Activated B cell treated with CpG ODN at 0.5 μM for 24 hours (primary cell): ENCODE measurements at regions of chr10 and their contacts with region 1.

Region 1: GRCh38 chr10:98467506-98468346 is 21.0 kb upstream of the HPS1 start:
- DNase-seq: peak; percentile 53
- ATAC-seq: peak; percentile 96
- H3K4me3 Mint-ChIP-seq: peak overlapping the region; percentile 97
- H3K27ac Mint-ChIP-seq: peak overlapping the region; percentile 88
- H3K4me1 Mint-ChIP-seq: peaks cover 4% of the 10 kb centered on the region
- H3K27me3 Mint-ChIP-seq: peaks cover 8% of the 10 kb centered on the region
- CTCF ChIP-seq: no peak

Region 2: DNA sequence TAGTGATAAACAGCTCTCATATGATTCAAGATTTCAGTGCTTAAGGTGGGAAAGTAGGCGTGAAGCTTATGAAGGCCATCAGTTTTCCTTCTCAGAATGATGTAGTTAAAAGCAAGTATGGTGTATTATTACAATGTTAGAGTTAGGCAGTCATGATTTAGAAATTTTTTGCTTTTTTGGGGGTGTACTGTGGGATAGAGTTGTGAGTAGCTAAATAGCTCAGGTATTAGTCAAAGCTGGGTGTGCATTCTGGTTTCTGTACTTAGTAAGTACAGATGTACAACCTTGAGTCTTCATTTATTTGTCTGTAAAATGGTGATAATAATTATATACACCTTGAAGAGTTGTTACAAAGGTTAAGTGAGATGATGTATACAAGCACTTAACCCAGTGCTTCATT is 281.0 kb before region 1 on chr10:
- CTCF ChIA-PET with region 1: no interaction called
- POLR2A ChIA-PET with region 1: no interaction called
- intact Hi-C with region 1: no loop called
- DNase-seq: no peak
- ATAC-seq: no peak
- H3K4me3 Mint-ChIP-seq: no peak overlapping the region
- H3K27ac Mint-ChIP-seq: no peak overlapping the region
- H3K4me1 Mint-ChIP-seq: peaks cover 3% of the 10 kb centered on the region
- H3K27me3 Mint-ChIP-seq: no peaks in the 10 kb centered on the region
- CTCF ChIP-seq: no peak

Region 3: GRCh38 chr10:98212196-98212595 is 255.5 kb before region 1 on chr10:
- CTCF ChIA-PET with region 1: no interaction called
- POLR2A ChIA-PET with region 1: no interaction called
- intact Hi-C with region 1: no loop called
- DNase-seq: no peak
- ATAC-seq: no peak
- H3K4me3 Mint-ChIP-seq: no peak overlapping the region
- H3K27ac Mint-ChIP-seq: no peak overlapping the region
- H3K4me1 Mint-ChIP-seq: peaks cover 27% of the 10 kb centered on the region
- H3K27me3 Mint-ChIP-seq: no peaks in the 10 kb centered on the region
- CTCF ChIP-seq: no peak

Region 4: GRCh38 chr10:98446661-98447221 is 21.0 kb before region 1 on chr10 and contains the start of gene HPS1:
- CTCF ChIA-PET with region 1: interaction called, 5 read pairs
- POLR2A ChIA-PET with region 1: interaction called, 5 read pairs
- intact Hi-C with region 1: loop called (anchors 1 kb)
- DNase-seq: peak; percentile 93
- ATAC-seq: peak; percentile 92
- H3K4me3 Mint-ChIP-seq: peak within 1 kb of the TSS; percentile 92
- H3K27ac Mint-ChIP-seq: peak within 1 kb of the TSS; percentile 96
- H3K4me1 Mint-ChIP-seq: peaks cover 56% of the 10 kb centered on the region
- H3K27me3 Mint-ChIP-seq: no peaks in the 10 kb centered on the region
- CTCF ChIP-seq: no peak
- total RNA-seq, gene HPS1: 104 and 106 TPM in 2 replicates

Region 5: GRCh38 chr10:98486421-98486820 is 18.7 kb after region 1 on chr10:
- CTCF ChIA-PET with region 1: no interaction called
- POLR2A ChIA-PET with region 1: no interaction called
- intact Hi-C with region 1: no loop called
- DNase-seq: no peak
- ATAC-seq: no peak
- H3K4me3 Mint-ChIP-seq: no peak overlapping the region
- H3K27ac Mint-ChIP-seq: no peak overlapping the region
- H3K4me1 Mint-ChIP-seq: peaks cover 2% of the 10 kb centered on the region
- H3K27me3 Mint-ChIP-seq: peaks cover 7% of the 10 kb centered on the region
- CTCF ChIP-seq: no peak

Region 6: DNA sequence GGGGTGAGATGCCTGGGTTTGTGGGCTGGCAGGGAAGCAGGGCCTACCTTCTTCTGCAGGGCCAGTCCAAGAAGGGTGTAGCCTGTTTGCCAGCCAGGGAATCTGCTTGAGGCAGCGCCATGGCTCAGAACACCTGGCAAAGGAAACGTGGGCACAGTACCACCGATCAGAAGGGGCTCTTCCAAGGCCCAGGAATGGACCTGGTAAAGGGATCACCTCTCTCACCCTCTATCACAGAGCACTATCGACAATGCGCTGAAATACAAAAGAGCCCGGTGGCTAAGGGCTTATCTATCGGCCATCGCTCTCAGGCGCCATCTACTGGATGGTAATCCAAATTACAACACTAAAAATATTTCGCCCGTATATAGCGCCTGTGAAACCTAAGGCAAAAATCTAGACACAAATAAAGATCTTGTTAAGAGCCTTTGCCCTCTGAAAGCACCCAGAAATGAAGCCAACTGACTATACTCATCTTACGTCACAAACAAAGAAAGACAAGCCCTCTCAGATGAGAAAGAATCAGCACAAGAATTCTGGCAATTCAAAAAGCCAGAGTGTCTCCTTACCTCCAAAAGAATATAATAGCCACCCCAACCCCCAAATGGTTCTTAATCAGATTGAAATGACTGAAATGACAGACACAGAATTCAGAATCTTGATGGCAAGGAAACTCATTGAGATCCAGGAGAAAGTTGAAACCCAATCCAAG is 196.8 kb after region 1 on chr10:
- CTCF ChIA-PET with region 1: interaction called, 25 read pairs
- POLR2A ChIA-PET with region 1: no interaction called
- intact Hi-C with region 1: loop called (anchors 1 kb)
- DNase-seq: no peak
- ATAC-seq: peak; percentile 49
- H3K4me3 Mint-ChIP-seq: no peak overlapping the region
- H3K27ac Mint-ChIP-seq: no peak overlapping the region
- H3K4me1 Mint-ChIP-seq: no peaks in the 10 kb centered on the region
- H3K27me3 Mint-ChIP-seq: peaks cover 22% of the 10 kb centered on the region
- CTCF ChIP-seq: no peak

Region 7: GRCh38 chr10:98694014-98694413 is 226.3 kb after region 1 on chr10:
- CTCF ChIA-PET with region 1: no interaction called
- POLR2A ChIA-PET with region 1: no interaction called
- intact Hi-C with region 1: no loop called
- DNase-seq: no peak
- ATAC-seq: no peak
- H3K4me3 Mint-ChIP-seq: no peak overlapping the region
- H3K27ac Mint-ChIP-seq: no peak overlapping the region
- H3K4me1 Mint-ChIP-seq: no peaks in the 10 kb centered on the region
- H3K27me3 Mint-ChIP-seq: peaks cover 11% of the 10 kb centered on the region
- CTCF ChIP-seq: no peak

Region 8: DNA sequence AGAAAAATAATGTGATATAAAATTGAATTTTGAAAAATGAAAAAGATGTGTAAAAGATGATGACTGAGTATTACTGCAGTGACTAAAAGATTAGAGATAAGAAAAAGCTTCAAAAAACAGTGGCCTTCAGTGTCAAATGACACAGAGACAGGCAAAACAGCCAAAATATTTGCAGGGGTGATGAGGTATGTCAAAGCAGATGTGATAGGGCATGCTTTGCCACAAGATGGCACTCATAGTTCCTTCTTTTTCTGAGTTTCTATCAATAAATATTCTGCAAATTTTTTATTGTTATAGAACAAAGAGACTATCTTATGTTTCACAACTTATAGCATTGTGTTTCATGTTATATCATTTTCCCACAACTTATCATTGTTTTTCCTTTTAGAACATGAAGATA is 323.1 kb after region 1 on chr10:
- CTCF ChIA-PET with region 1: interaction called, 3 read pairs
- POLR2A ChIA-PET with region 1: no interaction called
- intact Hi-C with region 1: loop called (anchors 5 kb)
- DNase-seq: no peak
- ATAC-seq: no peak
- H3K4me3 Mint-ChIP-seq: no peak overlapping the region
- H3K27ac Mint-ChIP-seq: no peak overlapping the region
- H3K4me1 Mint-ChIP-seq: no peaks in the 10 kb centered on the region
- H3K27me3 Mint-ChIP-seq: peaks cover 9% of the 10 kb centered on the region
- CTCF ChIP-seq: no peak

Region 9: DNA sequence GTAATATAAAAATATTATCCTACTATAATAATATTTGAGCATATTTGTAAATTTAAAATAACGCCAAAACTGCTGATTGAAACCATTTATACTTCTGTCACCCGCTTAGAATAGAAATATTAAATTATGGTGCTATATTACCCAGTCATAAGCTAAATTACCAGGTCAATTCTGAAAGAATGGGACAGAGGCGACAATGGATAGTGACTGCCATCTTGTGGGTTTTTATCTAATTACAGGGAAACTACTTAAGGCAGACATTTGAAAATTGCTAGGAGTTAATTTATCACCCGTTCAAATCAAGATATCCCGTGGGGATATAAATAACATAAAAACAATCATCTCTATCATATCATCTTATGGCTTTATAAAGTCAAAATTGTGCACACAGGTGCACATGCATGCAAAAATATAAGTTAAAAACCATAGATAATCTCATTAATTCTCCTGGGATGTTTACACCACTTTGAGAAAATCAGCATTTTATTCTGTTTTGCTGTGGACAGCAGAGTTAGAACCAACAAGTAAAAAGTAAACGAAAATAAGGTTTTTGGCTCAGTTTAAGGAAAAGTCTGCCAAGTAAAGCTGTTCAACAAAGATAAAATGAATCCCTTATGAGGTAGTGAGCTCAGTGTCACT is 809.2 kb after region 1 on chr10:
- CTCF ChIA-PET with region 1: interaction called, 3 read pairs
- POLR2A ChIA-PET with region 1: no interaction called
- intact Hi-C with region 1: loop called (anchors 1 kb)
- DNase-seq: no peak
- ATAC-seq: no peak
- H3K4me3 Mint-ChIP-seq: no peak overlapping the region
- H3K27ac Mint-ChIP-seq: no peak overlapping the region
- H3K4me1 Mint-ChIP-seq: peaks cover 2% of the 10 kb centered on the region
- H3K27me3 Mint-ChIP-seq: peaks cover 12% of the 10 kb centered on the region
- CTCF ChIP-seq: no peak

Region 10: DNA sequence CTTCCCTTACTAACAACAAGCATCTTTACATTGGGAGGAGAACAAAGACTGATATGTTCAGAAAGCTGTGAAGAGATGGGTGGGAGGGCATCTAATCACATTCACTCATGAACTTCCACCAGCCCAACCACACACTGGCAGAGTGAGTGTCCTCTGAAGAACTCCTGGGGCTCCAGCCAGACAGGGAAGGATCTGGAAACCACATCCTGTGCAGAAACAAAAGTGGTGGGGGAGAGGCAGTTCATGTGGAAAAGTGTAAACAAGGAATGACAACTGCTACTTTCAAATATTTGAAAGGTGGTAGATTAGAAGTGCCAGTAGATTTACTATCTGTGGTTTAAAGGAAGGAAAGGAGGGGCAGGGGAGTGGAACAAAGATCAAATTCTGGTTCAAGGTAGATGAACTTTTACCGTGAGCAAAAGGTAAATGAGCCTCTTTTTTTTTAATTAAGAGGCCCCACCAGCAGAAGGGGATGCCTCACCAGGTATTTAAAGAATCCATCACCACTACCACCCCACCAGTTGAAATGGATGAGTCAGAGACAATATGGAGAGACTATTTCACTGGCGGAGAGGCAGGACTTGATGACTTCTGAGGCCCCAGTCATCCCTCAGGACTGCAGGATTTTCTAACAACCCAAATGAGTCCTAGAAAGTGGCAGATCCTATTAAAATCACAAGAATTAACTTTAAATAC is 928.2 kb after region 1 on chr10:
- CTCF ChIA-PET with region 1: interaction called, 3 read pairs
- POLR2A ChIA-PET with region 1: no interaction called
- intact Hi-C with region 1: loop called (anchors 10 kb)
- DNase-seq: no peak
- ATAC-seq: no peak
- H3K4me3 Mint-ChIP-seq: no peak overlapping the region
- H3K27ac Mint-ChIP-seq: no peak overlapping the region
- H3K4me1 Mint-ChIP-seq: no peaks in the 10 kb centered on the region
- H3K27me3 Mint-ChIP-seq: peaks cover 2% of the 10 kb centered on the region
- CTCF ChIP-seq: no peak

Region 11: GRCh38 chr10:99620713-99621453 is 1153.2 kb after region 1 on chr10:
- CTCF ChIA-PET with region 1: no interaction called
- POLR2A ChIA-PET with region 1: no interaction called
- intact Hi-C with region 1: loop called (anchors 5 kb)
- DNase-seq: peak; percentile 80
- ATAC-seq: peak; percentile 85
- H3K4me3 Mint-ChIP-seq: peak overlapping the region; percentile 92
- H3K27ac Mint-ChIP-seq: peak overlapping the region; percentile 95
- H3K4me1 Mint-ChIP-seq: peaks cover 49% of the 10 kb centered on the region
- H3K27me3 Mint-ChIP-seq: no peaks in the 10 kb centered on the region
- CTCF ChIP-seq: no peak